Spleen (tissue), 13 donors: ENCODE measurements at regions of chr19 and their contacts with region 1.

Region 1: DNA sequence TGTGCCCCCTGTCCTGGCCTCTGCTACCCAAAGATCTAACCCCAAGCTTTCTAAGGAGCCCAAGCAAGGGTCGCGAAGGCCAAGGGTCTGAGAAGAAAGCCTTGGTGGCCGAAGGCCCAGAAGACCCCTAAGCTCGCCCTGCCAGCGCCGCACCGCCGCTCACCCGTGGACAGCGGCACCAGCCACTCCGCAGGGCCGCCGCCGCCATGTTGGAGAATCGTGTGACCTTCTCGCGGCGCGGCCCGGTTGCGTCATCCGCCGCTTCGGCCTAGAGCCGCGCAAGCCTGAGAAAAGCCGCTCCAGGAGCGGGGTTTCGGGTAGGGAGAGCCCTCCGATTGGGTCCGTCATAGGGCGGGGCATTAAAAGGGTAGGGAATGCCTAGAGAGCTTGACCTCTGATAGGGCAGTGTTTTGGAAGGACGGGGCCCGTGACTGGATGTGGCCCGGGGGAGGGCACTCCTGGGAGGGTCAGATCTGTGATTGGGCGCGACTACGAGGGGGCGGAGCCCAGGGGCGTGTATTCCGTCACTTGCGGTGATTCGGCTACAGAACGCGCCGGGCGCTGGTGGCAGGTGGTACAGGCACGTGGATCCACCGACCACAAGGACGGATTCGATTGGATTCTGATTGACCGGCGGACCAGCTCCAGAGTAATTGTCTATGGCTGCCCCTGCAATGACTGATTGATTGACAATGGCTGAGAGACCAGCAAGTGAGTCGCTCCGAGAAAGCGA is at the start of gene TIMM44:
- DNase-seq: peak; percentile 99
- H3K4me3 ChIP-seq: peak within 1 kb of the TSS; percentile 57 to 94 (median 78)
- H3K27ac ChIP-seq: peak within 1 kb of the TSS; percentile 82 to 98 (median 96)
- H3K4me1 ChIP-seq: peaks cover 5 to 59% (median 33%) of the 10 kb centered on the region in 6 donors
- H3K27me3 ChIP-seq: no peaks in the 10 kb centered on the region
- CTCF ChIP-seq: no peak
- POLR2A ChIP-seq: peak; percentile 50 to 78 (median 57)
- total RNA-seq, gene TIMM44: 33.2 to 94.9 (median 63.5) TPM

Region 2: DNA sequence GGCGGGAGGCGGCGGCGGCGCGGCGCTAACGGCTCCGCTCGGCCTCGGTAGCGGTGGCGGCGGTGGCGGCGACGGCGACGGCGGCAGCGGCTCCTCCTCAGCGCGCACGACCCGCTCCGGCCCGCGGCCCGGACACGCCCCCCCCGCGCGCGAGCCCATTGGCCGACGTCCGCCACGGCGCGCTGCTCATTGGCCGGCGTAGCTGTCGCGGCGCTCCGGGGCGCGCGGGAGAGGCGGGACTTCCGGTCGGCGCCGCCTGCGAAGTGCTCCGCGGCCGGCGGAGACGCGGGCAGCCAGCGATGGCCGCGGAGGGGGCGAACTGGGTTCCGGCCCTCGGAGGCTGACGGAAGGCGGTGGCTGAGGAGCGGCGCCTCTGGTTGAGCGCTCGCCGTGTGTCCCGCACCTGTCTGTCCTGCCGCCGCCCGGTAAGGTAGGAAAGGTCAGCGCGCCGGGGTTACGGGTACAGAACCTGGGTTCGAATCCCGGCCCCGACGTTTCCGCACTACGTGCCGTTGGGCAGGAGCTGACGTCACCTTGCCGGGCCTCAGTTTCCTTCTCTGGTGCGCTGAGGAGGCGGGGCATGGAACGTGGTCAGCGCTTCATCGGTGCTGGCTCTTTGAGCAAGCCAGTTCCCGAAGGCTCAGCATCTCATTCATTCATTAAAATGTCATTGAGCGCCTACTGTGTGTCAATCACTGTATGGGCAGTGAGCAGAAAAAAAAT is 62.1 kb after region 1 on chr19 and contains the start of gene ELAVL1:
- intact Hi-C with region 1: loop called (anchors 10 kb)
- DNase-seq: peak; percentile 93
- H3K4me3 ChIP-seq: peak within 1 kb of the TSS; percentile 65 to 93 (median 84)
- H3K27ac ChIP-seq: peak within 1 kb of the TSS; percentile 75 to 92 (median 86)
- H3K4me1 ChIP-seq: peaks cover 37 to 55% (median 50%) of the 10 kb centered on the region in 6 donors
- H3K27me3 ChIP-seq: no peaks in the 10 kb centered on the region
- CTCF ChIP-seq: no peak
- POLR2A ChIP-seq: no peak
- total RNA-seq, gene ELAVL1: 28.2 to 66.7 (median 52.9) TPM

Region 3: GRCh38 chr19:8252922-8253589 is 309.4 kb after region 1 on chr19:
- intact Hi-C with region 1: loop called (anchors 5 kb)
- DNase-seq: peak; percentile 95
- H3K4me3 ChIP-seq: no peak overlapping the region
- H3K27ac ChIP-seq: no peak overlapping the region
- H3K4me1 ChIP-seq: peaks cover 0 to 13% (median 6%) of the 10 kb centered on the region in 6 donors
- H3K27me3 ChIP-seq: no peaks in the 10 kb centered on the region
- CTCF ChIP-seq: peak; percentile 92 to 97 (median 95)
- POLR2A ChIP-seq: no peak